ENCODE measurements at regions of chr11 and their contacts with region 1.

Region 1: GRCh38 chr11:111982019-111982464 is 43.2 kb upstream of the DLAT start:
- DNase-seq: peak; percentile 5
- ATAC-seq: peak; percentile 96
- H3K4me3 ChIP-seq: no peak overlapping the region
- H3K27ac ChIP-seq: no peak overlapping the region
- H3K4me1 ChIP-seq: peaks cover 4% of the 10 kb centered on the region
- H3K27me3 ChIP-seq: peaks cover 3 to 8% of the 10 kb centered on the region in 2 experiments; a peak in 2 of 4 replicates
- CTCF ChIP-seq: peak; percentile 70 to 78 (median 74)
- EP300 ChIP-seq: no peak
- POLR2A ChIP-seq: no peak
- RAD21 ChIP-seq: peak; percentile 79

Region 2: GRCh38 chr11:111565114-111565720 is 416.8 kb before region 1 on chr11:
- CTCF ChIA-PET with region 1: interaction called, 5 read pairs
- POLR2A ChIA-PET with region 1: no interaction called
- RAD21 ChIA-PET with region 1: no interaction called
- SMC1A ChIA-PET with region 1: no interaction called
- in situ Hi-C with region 1: no loop called
- intact Hi-C with region 1: loop called (anchors 10 kb)
- DNase-seq: peak; percentile 32
- ATAC-seq: peak; percentile 75
- H3K4me3 ChIP-seq: no peak overlapping the region
- H3K27ac ChIP-seq: no peak overlapping the region
- H3K4me1 ChIP-seq: no peaks in the 10 kb centered on the region
- H3K27me3 ChIP-seq: no peaks in the 10 kb centered on the region
- CTCF ChIP-seq: peak; percentile 73 to 86 (median 83)
- EP300 ChIP-seq: no peak
- POLR2A ChIP-seq: no peak
- RAD21 ChIP-seq: peak; percentile 89

Region 3: GRCh38 chr11:111926505-111927391 is 55.3 kb before region 1 on chr11:
- CTCF ChIA-PET with region 1: interaction called, 180 read pairs
- POLR2A ChIA-PET with region 1: interaction called, 5 read pairs
- RAD21 ChIA-PET with region 1: interaction called, 109 read pairs
- SMC1A ChIA-PET with region 1: interaction called, 45 read pairs
- in situ Hi-C with region 1: no loop called
- intact Hi-C with region 1: no loop called
- DNase-seq: peak; percentile 84
- ATAC-seq: peak; percentile 98
- H3K4me3 ChIP-seq: peak overlapping the region; percentile 66
- H3K27ac ChIP-seq: peak overlapping the region; percentile 66
- H3K4me1 ChIP-seq: peaks cover 10% of the 10 kb centered on the region
- H3K27me3 ChIP-seq: no peaks in the 10 kb centered on the region; a peak in 1 of 4 replicates
- CTCF ChIP-seq: no peak
- EP300 ChIP-seq: no peak
- POLR2A ChIP-seq: peak; percentile 79
- RAD21 ChIP-seq: no peak

Region 4: DNA sequence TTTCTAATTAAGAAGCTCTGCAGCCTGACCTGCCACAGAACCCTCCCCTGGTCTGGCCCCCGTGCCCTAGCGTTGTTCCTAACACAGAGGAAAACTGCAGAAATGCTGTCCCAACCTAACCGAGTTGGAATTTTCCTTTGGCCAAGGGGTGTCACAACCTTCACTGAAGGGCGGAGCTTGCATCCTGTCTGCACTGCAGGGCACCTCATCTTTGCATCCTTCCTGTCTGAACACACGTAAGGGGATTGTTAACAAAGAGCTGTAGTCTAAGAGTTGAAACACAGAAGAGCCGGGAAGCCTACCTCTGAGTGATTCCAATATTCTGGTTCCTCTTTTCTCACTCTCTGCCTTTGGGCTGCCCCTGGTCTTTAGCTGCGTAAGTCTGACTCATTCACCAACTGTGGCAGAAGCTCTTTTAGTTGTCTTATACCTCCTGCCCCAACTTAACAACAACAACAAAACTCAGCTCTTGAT is 43.3 kb before region 1 on chr11:
- CTCF ChIA-PET with region 1: interaction called, 180 read pairs
- POLR2A ChIA-PET with region 1: interaction called, 3 read pairs
- RAD21 ChIA-PET with region 1: interaction called, 109 read pairs
- SMC1A ChIA-PET with region 1: interaction called, 30 read pairs
- in situ Hi-C with region 1: no loop called
- intact Hi-C with region 1: loop called (anchors 2 kb)
- DNase-seq: peak; percentile 71
- ATAC-seq: peak; percentile 93
- H3K4me3 ChIP-seq: peak overlapping the region; percentile 47
- H3K27ac ChIP-seq: peak overlapping the region; percentile 35; the same call in 1 of the 2 replicates
- H3K4me1 ChIP-seq: peaks cover 22% of the 10 kb centered on the region
- H3K27me3 ChIP-seq: 0 out of 4 replicates have a peak, but pooled peaks cover 0 to 1% of the 10 kb centered on the region in 2 experiments
- CTCF ChIP-seq: no peak
- EP300 ChIP-seq: peak in 1 of 2 experiments; percentile 65; a peak in 1 of 4 replicates
- POLR2A ChIP-seq: no peak
- RAD21 ChIP-seq: no peak

Region 5: GRCh38 chr11:112002491-112003216 is 20.6 kb after region 1 on chr11:
- CTCF ChIA-PET with region 1: interaction called, 11 read pairs
- POLR2A ChIA-PET with region 1: no interaction called
- RAD21 ChIA-PET with region 1: interaction called, 3 read pairs
- SMC1A ChIA-PET with region 1: interaction called, 8 read pairs
- in situ Hi-C with region 1: no loop called
- intact Hi-C with region 1: no loop called
- DNase-seq: no peak
- ATAC-seq: no peak
- H3K4me3 ChIP-seq: no peak overlapping the region
- H3K27ac ChIP-seq: no peak overlapping the region
- H3K4me1 ChIP-seq: no peaks in the 10 kb centered on the region
- H3K27me3 ChIP-seq: no peaks in the 10 kb centered on the region
- CTCF ChIP-seq: no peak
- EP300 ChIP-seq: no peak
- POLR2A ChIP-seq: no peak
- RAD21 ChIP-seq: no peak

Measured in GM12878 (cell line).